A673 (cell line): ENCODE measurements at regions of chr1 and their contacts with region 1.

Region 1: GRCh38 chr1:186212544-186213226 is 162.4 kb downstream of the TPR start:
- DNase-seq: peak; percentile 92
- H3K4me3 ChIP-seq: no peak overlapping the region
- H3K27ac ChIP-seq: peak overlapping the region; percentile 25
- H3K4me1 ChIP-seq: peaks cover 34% of the 10 kb centered on the region
- H3K27me3 ChIP-seq: no peaks in the 10 kb centered on the region
- CTCF ChIP-seq: peak; percentile 96

Region 2: DNA sequence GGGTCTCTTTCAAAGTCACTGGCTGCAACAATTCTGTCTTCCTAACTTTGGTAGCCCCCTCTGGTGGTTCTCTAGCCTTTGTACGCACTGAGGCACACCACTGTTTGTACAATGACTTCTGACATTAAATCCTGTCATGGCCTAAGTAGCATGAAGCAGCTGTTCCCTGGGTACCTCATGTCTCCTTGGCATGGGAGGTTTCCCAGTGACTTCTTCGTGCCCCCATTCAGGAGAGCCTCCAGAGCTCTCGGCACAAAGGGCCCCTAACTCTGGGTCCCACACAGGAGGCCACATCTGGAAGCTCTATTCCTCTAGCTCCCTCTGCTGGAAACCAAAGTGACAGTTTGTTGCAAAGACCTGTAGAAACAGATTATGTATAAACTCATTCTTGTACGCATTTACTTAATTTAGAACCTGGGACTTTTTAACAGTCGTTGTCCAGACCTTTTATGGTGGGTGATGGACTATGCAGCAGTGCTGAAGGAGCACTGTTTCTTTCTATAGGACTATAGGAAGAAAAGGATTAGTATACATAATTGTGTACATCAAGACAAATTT is 1042.3 kb before region 1 on chr1:
- CTCF ChIA-PET with region 1: no interaction called
- POLR2A ChIA-PET with region 1: no interaction called
- intact Hi-C with region 1: loop called (anchors 1 kb)
- DNase-seq: peak; percentile 88
- H3K4me3 ChIP-seq: peak overlapping the region; percentile 7
- H3K27ac ChIP-seq: no peak overlapping the region
- H3K4me1 ChIP-seq: no peaks in the 10 kb centered on the region
- H3K27me3 ChIP-seq: no peaks in the 10 kb centered on the region
- CTCF ChIP-seq: peak; percentile 98

Region 3: DNA sequence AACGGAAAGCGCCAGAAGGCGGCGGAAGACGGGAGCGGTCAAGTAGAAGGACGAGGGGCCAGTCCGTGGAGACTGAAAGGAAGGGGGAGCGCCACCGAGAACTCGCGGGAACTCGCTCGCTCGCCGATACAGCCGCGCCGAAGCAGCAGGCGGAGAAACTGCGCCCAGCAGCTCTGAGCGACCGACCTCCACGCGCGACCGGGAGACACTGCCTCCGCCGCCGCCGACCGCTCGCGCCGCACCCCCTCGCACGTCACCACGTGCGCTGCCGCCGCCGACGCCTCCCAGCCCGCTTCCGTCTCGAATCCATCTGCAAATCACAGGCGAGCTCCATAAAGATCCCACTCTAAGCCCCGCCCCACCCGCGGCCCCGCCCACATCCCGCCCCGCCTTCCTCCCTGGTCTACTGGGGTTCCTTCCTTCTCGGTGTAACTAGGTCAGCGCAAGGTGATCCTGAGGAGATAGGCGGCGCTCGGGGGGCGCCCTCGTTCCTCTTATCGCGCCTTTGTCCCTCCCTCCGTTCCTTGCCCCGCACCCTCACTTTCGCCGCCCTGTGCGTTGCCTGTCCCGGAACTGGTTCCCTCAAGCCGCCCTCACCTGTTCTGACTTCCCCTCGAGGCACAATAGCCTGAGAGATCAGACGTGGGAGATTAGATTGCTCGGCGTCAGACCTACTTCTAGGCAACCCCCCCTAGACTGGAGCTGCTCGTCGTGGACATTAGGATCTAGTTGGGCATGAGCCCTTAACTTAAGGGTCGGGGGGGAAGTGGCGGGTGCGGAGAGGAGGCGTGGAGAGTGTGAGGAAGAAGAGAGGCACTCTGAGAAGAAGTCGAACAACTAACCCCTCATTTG is 895.4 kb before region 1 on chr1 and contains the start of gene IVNS1ABP:
- CTCF ChIA-PET with region 1: no interaction called
- POLR2A ChIA-PET with region 1: no interaction called
- intact Hi-C with region 1: loop called (anchors 5 kb)
- DNase-seq: peak; percentile 97
- H3K4me3 ChIP-seq: peak within 1 kb of the TSS; percentile 95
- H3K27ac ChIP-seq: peak within 1 kb of the TSS; percentile 99
- H3K4me1 ChIP-seq: peaks cover 22% of the 10 kb centered on the region
- H3K27me3 ChIP-seq: no peaks in the 10 kb centered on the region
- CTCF ChIP-seq: peak; percentile 48
- total RNA-seq, gene IVNS1ABP: 221 and 263 TPM in 2 replicates

Region 4: GRCh38 chr1:185686821-185687778 is 525.6 kb before region 1 on chr1:
- CTCF ChIA-PET with region 1: interaction called, 6 read pairs
- POLR2A ChIA-PET with region 1: no interaction called
- intact Hi-C with region 1: loop called (anchors 2 kb)
- DNase-seq: peak; percentile 90
- H3K4me3 ChIP-seq: no peak overlapping the region
- H3K27ac ChIP-seq: peak overlapping the region; percentile 100
- H3K4me1 ChIP-seq: peaks cover 66% of the 10 kb centered on the region
- H3K27me3 ChIP-seq: no peaks in the 10 kb centered on the region
- CTCF ChIP-seq: no peak

Region 5: GRCh38 chr1:185720633-185721272 is 491.9 kb before region 1 on chr1:
- CTCF ChIA-PET with region 1: interaction called, 7 read pairs
- POLR2A ChIA-PET with region 1: no interaction called
- intact Hi-C with region 1: loop called (anchors 1 kb)
- DNase-seq: peak; percentile 88
- H3K4me3 ChIP-seq: no peak overlapping the region
- H3K27ac ChIP-seq: peak overlapping the region; percentile 100
- H3K4me1 ChIP-seq: peaks cover 64% of the 10 kb centered on the region
- H3K27me3 ChIP-seq: no peaks in the 10 kb centered on the region
- CTCF ChIP-seq: peak; percentile 81

Region 6: DNA sequence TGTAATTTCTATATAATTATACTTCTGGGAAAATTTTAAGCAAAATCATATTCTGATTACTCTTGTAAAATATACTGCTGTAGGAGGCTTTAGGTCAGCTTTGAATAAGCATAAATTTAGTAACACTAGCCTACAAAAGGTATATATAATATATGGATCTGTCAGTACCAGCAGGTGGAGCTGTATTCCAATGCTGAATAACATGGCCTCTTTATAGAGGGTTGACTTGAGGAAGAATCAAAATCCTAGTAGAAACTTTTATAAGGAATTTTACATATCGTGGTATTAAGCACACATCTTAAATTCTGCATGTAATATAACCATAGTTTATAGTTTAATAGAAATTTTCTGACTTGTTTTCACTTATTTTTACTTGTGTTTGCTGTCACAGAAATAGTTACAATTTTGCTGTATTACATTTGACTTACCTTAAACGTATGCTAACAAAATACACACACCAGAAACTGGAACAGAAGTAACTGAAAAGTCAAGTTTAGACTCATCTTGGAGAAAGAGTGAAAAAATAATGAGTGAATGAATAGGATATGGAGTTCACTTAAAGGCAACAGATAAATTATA is 399.2 kb before region 1 on chr1:
- CTCF ChIA-PET with region 1: no interaction called
- POLR2A ChIA-PET with region 1: no interaction called
- intact Hi-C with region 1: loop called (anchors 5 kb)
- DNase-seq: peak; percentile 85
- H3K4me3 ChIP-seq: no peak overlapping the region
- H3K27ac ChIP-seq: peak overlapping the region; percentile 29
- H3K4me1 ChIP-seq: peaks cover 73% of the 10 kb centered on the region
- H3K27me3 ChIP-seq: no peaks in the 10 kb centered on the region
- CTCF ChIP-seq: peak; percentile 86

Region 7: DNA sequence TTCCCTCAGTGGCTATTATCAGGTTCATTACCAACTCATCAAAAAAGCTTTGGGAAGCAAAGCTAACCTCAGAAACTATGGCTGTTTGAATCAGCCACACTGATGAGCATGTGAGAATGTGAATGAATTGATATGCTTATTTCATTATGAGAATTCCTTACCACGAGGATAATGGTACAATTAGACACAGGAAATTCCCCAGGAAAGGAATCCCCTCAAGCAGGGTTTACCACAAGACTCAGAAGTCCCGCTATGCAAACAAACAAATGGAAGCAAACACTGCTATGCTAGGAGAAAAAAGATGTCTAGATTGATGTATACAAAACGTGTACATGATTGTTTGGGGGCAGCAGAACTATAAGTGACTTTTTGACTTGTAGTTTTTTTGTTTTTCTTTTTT is 273.5 kb before region 1 on chr1:
- CTCF ChIA-PET with region 1: no interaction called
- POLR2A ChIA-PET with region 1: no interaction called
- intact Hi-C with region 1: no loop called
- DNase-seq: peak; percentile 81
- H3K4me3 ChIP-seq: no peak overlapping the region
- H3K27ac ChIP-seq: peak overlapping the region; percentile 44
- H3K4me1 ChIP-seq: peaks cover 54% of the 10 kb centered on the region
- H3K27me3 ChIP-seq: no peaks in the 10 kb centered on the region
- CTCF ChIP-seq: no peak

Region 8: GRCh38 chr1:186155594-186155993 is 57.1 kb before region 1 on chr1:
- CTCF ChIA-PET with region 1: no interaction called
- POLR2A ChIA-PET with region 1: no interaction called
- intact Hi-C with region 1: loop called (anchors 1 kb)
- DNase-seq: peak; percentile 78
- H3K4me3 ChIP-seq: no peak overlapping the region
- H3K27ac ChIP-seq: peak overlapping the region; percentile 29
- H3K4me1 ChIP-seq: peaks cover 26% of the 10 kb centered on the region
- H3K27me3 ChIP-seq: no peaks in the 10 kb centered on the region
- CTCF ChIP-seq: peak; percentile 73